Caco-2 (cell line): ENCODE measurements at regions of chr6 and their contacts with region 1.

Region 1: GRCh38 chr6:16277101-16277981 is 39.0 kb downstream of the GMPR start:
- DNase-seq: peak; percentile 83 to 91
- H3K4me3 ChIP-seq: no peak overlapping the region
- H3K4me3 Mint-ChIP-seq: peak overlapping the region; percentile 52
- H3K27ac Mint-ChIP-seq: peak overlapping the region; percentile 94
- H3K4me1 ChIP-seq: peaks cover 17% of the 10 kb centered on the region
- H3K4me1 Mint-ChIP-seq: peaks cover 19% of the 10 kb centered on the region
- H3K27me3 ChIP-seq: no peaks in the 10 kb centered on the region
- H3K27me3 Mint-ChIP-seq: no peaks in the 10 kb centered on the region
- CTCF ChIP-seq: peak; percentile 49 to 76

Region 2: DNA sequence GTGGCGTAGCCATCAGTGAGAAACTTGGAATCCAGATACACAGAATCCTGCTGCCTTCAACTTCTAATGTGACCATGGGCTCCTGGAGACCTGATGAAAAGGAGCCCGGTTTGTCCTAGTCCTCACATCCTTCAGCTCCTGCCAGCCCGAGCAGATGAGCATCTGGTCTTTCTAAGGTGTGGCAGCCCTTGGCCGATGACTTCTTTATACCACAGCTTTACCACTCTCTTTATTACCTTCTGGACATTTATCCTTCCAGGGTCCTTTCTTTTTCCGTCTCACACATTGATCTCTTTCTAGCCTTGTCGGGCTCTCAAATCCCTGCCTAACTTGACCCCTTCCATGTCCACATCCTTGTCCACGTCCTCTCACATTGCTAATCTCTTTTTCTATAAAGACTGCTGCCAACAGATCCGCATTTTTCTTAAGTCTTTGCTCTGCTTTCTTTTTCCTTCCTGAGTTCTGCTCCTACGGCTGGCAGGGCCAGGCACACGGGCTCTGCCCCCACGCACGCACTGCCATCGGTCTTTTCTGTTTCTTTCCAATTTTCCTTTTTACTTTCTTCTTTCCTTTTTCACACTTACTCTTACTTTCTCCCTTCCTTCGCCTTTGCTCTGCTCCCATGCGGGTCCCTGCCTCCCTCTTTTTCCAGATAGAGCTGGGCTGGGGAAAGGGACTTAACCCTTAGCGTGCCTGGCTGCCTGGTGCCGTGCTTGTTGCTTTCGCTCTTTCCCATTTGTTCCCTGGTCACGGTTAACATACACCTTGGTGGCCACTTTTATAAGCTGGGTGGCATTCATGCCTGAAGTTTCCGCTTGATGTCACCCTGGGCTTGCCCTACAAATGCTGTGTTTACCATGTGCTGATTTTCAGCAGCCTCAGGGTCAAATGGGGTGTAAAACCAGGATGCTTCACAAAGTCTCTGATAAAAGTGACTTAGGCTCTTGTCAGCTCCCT is 48.4 kb before region 1 on chr6:
- CTCF ChIA-PET with region 1: no interaction called
- POLR2A ChIA-PET with region 1: no interaction called
- intact Hi-C with region 1: loop called (anchors 2 kb)
- DNase-seq: no peak
- H3K4me3 ChIP-seq: no peak overlapping the region
- H3K4me3 Mint-ChIP-seq: no peak overlapping the region
- H3K27ac Mint-ChIP-seq: no peak overlapping the region
- H3K4me1 ChIP-seq: no peaks in the 10 kb centered on the region
- H3K4me1 Mint-ChIP-seq: no peaks in the 10 kb centered on the region
- H3K27me3 ChIP-seq: no peaks in the 10 kb centered on the region
- H3K27me3 Mint-ChIP-seq: no peaks in the 10 kb centered on the region
- CTCF ChIP-seq: no peak

Region 3: DNA sequence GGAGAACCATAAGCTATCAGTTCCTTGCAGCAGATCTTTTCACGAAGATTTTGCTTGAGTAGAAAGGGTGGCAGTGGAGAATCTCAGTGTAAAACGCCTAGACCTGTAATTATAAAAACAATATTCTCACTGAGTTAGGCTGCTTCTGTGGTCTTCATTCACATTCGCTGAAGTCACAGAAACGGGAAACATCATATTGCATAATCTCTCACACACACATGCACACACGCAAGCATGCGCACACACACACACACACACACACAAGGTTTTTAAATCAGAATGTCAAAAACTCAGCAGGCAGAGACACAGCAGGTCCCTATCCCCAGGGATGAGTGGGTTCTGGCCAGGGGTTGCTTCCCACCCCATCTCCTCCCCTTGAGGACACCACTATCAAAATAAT is 308.5 kb after region 1 on chr6:
- CTCF ChIA-PET with region 1: no interaction called
- POLR2A ChIA-PET with region 1: no interaction called
- intact Hi-C with region 1: no loop called
- DNase-seq: no peak
- H3K4me3 ChIP-seq: no peak overlapping the region
- H3K4me3 Mint-ChIP-seq: no peak overlapping the region
- H3K27ac Mint-ChIP-seq: no peak overlapping the region
- H3K4me1 ChIP-seq: peaks cover 4% of the 10 kb centered on the region; the same call in 1 of the 2 replicates
- H3K4me1 Mint-ChIP-seq: peaks cover 7% of the 10 kb centered on the region
- H3K27me3 ChIP-seq: no peaks in the 10 kb centered on the region
- H3K27me3 Mint-ChIP-seq: no peaks in the 10 kb centered on the region
- CTCF ChIP-seq: no peak